ENCODE measurements at regions of chrX and their contacts with region 1.

Region 1: DNA sequence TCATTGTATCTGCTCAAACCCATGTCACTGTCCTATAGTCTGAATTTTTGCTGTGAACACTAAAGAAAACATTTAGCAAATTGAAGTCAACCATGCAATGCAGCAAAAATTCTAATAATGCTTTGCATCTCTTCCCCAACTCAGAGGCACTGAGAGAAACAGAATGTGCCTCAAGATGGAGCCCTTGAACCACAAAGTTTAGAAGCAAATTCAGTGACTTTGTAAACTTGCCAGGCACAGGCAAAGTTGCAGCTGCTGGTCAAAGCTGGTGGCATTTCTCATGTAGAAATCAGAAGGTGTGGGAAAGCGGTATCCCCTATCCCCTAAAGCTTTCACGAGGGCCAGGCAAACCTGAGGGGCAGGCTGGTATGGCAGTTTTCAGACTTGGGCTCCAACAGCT is 121.7 kb upstream of the DIPK2B start:
- DNase-seq: peak; percentile 53
- H3K4me3 ChIP-seq: no peak overlapping the region
- CTCF ChIP-seq: peak; percentile 33

Region 2: GRCh38 chrX:45515262-45516215 is 193.2 kb after region 1 on chrX:
- CTCF ChIA-PET with region 1: interaction called, 27 read pairs
- POLR2A ChIA-PET with region 1: no interaction called
- DNase-seq: peak; percentile 74
- H3K4me3 ChIP-seq: no peak overlapping the region
- CTCF ChIP-seq: peak; percentile 50

Region 3: GRCh38 chrX:45540181-45540580 is 217.8 kb after region 1 on chrX:
- CTCF ChIA-PET with region 1: no interaction called
- POLR2A ChIA-PET with region 1: no interaction called
- DNase-seq: no peak
- H3K4me3 ChIP-seq: no peak overlapping the region
- CTCF ChIP-seq: no peak

Region 4: DNA sequence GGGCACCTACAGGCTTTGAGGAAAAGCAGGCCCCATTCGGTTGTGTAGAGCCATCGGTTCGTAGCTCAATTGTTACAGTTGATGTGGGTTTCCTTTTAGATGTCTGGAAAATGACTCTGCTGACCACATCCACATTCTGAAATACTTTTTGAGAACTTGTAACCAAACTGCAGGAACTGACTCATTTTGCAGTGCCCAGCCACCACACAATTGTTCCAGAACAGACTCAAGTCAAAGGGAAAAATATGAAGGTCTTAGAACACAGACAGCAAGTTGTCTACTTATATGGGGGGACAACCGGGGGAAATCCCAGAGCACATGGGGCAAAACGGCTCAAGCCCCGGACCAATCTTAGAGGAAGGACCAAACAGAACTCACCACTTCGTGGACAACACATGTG is 435.9 kb after region 1 on chrX:
- CTCF ChIA-PET with region 1: no interaction called
- POLR2A ChIA-PET with region 1: no interaction called
- DNase-seq: no peak
- H3K4me3 ChIP-seq: no peak overlapping the region
- CTCF ChIP-seq: no peak

Region 5: DNA sequence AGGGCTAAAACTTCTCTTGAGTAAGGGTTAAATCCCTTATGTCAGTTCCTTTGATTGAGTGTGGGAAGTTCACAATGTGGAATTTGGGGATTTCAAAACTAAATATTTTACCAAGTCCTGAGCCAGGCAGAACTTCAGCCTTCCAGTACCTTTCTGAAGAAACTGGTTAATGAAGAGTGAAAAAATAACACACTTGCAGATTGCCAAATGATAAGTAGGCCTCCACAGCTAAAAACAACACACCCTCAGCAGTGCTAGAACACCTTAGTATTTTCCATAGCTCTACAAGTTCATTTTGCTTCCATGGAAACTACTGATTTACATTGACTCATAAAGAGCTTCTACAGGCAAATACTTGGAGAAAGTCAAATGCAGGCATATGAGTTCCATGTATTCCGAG is 896.0 kb after region 1 on chrX:
- CTCF ChIA-PET with region 1: no interaction called
- POLR2A ChIA-PET with region 1: no interaction called
- DNase-seq: no peak
- H3K4me3 ChIP-seq: no peak overlapping the region
- CTCF ChIP-seq: no peak

Region 6: GRCh38 chrX:46268429-46268828 is 946.0 kb after region 1 on chrX:
- CTCF ChIA-PET with region 1: no interaction called
- POLR2A ChIA-PET with region 1: no interaction called
- DNase-seq: no peak
- H3K4me3 ChIP-seq: no peak overlapping the region
- CTCF ChIP-seq: no peak